Activated T-helper 2 cell treated with anti-CD3 and anti-CD28 coated beads, Interferon-gamma antibody, Interleukin-2, Interleukin-4, amounts not matched to agents 10 μg/mL and 5 μg/mL and 100 μg/mL, durations not matched to agents 14 hours and 24 hours and 36 hours (primary cell): ENCODE measurements at regions of chr9 and their contacts with region 1.

Region 1: GRCh38 chr9:129737479-129738274 is 15.2 kb downstream of the PTGES start:
- DNase-seq: peak; percentile 81
- H3K4me3 Mint-ChIP-seq: peak overlapping the region; percentile 68
- H3K27ac Mint-ChIP-seq: peak overlapping the region; percentile 52
- H3K4me1 Mint-ChIP-seq: peaks cover 6% of the 10 kb centered on the region
- H3K27me3 Mint-ChIP-seq: peaks cover 4% of the 10 kb centered on the region

Region 2: GRCh38 chr9:129669141-129669718 is 68.4 kb before region 1 on chr9:
- intact Hi-C with region 1: no loop called
- DNase-seq: no peak
- H3K4me3 Mint-ChIP-seq: no peak overlapping the region
- H3K27ac Mint-ChIP-seq: no peak overlapping the region
- H3K4me1 Mint-ChIP-seq: peaks cover 13% of the 10 kb centered on the region
- H3K27me3 Mint-ChIP-seq: peaks cover 13% of the 10 kb centered on the region

Region 3: DNA sequence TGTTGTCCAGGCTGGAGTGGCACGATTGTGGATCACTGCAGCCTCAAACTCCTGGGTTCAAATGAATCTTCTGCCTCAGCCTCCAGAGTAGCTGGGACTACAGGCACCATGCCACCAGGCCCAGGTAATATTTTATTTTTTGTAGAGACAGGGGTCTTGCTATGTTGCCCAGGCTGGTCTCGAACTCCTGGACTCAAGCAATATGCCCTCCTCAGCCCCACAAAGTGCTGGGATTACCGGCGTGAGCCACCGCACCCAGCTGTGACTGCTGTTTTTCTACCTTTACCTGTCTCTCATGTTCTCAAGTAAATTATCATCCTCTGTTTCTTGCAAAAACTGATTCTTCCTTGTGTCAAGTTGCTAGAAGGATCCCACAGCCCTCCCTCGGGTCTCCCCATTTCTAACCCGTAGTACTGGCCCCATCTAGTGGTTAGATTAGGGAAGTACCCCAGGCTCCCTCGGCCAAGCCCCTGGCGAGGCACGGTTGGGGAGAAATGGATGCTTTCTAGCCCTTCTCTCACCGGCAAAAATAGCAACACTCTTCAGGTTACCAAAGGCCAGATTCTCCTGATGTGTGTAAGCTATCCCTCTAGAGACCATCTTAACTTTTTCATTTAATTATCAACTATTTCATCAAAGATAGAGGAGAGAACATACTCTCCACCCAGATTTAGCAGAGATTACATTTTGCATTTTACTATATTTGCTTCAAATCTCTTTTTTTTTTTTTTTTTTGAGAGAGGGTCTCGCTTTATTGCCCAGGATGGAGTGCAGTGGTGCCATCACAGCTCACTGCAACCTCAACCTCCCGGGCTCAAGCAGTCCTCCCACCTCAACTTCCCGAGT is 46.1 kb after region 1 on chr9:
- intact Hi-C with region 1: loop called (anchors 1 kb)
- DNase-seq: peak; percentile 63
- H3K4me3 Mint-ChIP-seq: no peak overlapping the region
- H3K27ac Mint-ChIP-seq: no peak overlapping the region
- H3K4me1 Mint-ChIP-seq: peaks cover 4% of the 10 kb centered on the region
- H3K27me3 Mint-ChIP-seq: peaks cover 14% of the 10 kb centered on the region